ENCODE measurements at regions of chr11 and their contacts with region 1.

Region 1: GRCh38 chr11:117807482-117808327 is 10.7 kb upstream of the DSCAML1 start:
- DNase-seq: no peak
- ATAC-seq: peak; percentile 56
- H3K4me3 ChIP-seq: no peak overlapping the region
- H3K27ac ChIP-seq: no peak overlapping the region
- H3K4me1 ChIP-seq: no peaks in the 10 kb centered on the region
- H3K27me3 ChIP-seq: no peaks in the 10 kb centered on the region; a peak in 1 of 5 replicates
- CTCF ChIP-seq: peak; percentile 80
- EP300 ChIP-seq: no peak
- POLR2A ChIP-seq: no peak
- RAD21 ChIP-seq: peak; percentile 57; the same call in 1 of the 2 replicates

Region 2: DNA sequence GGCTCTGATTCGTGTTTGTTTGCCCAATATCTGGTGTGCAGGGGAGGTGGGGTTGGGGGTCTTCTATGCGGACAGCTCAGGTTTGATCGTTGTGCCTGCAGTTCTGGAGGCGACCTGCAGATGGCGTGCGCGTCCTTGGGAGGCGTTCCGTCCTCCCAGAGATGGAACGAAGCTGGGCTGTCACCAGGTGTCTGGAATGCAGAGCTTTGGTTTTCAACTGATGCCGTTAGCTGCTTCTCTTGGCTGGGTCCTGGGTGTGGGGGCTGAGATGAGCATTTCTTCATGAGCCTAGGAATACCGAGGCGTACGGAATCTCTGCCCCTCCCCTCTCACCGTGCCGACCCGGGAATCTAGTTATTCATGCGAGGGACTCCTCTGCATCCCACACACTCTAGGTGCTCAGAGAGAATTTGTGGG is 381.4 kb before region 1 on chr11:
- CTCF ChIA-PET with region 1: no interaction called
- POLR2A ChIA-PET with region 1: no interaction called
- in situ Hi-C with region 1: no loop called
- intact Hi-C with region 1: loop called (anchors 1 kb)
- DNase-seq: peak; percentile 38
- ATAC-seq: peak; percentile 80
- H3K4me3 ChIP-seq: no peak overlapping the region
- H3K27ac ChIP-seq: no peak overlapping the region
- H3K4me1 ChIP-seq: peaks cover 4% of the 10 kb centered on the region; the same call in 1 of the 2 replicates
- H3K27me3 ChIP-seq: peaks cover 2 to 24% of the 10 kb centered on the region in 2 experiments; a peak in 4 of 5 replicates
- CTCF ChIP-seq: peak; percentile 95
- EP300 ChIP-seq: no peak
- POLR2A ChIP-seq: no peak
- RAD21 ChIP-seq: peak; percentile 79

Region 3: GRCh38 chr11:117443266-117444195 is 364.2 kb before region 1 on chr11:
- CTCF ChIA-PET with region 1: interaction called, 6 read pairs
- POLR2A ChIA-PET with region 1: no interaction called
- in situ Hi-C with region 1: loop called (anchors 5 kb)
- intact Hi-C with region 1: no loop called
- DNase-seq: peak; percentile 40
- ATAC-seq: peak; percentile 96
- H3K4me3 ChIP-seq: no peak overlapping the region
- H3K27ac ChIP-seq: no peak overlapping the region
- H3K4me1 ChIP-seq: no peaks in the 10 kb centered on the region
- H3K27me3 ChIP-seq: peaks cover 2 to 32% of the 10 kb centered on the region in 2 experiments; a peak in 3 of 5 replicates
- CTCF ChIP-seq: peak; percentile 89
- EP300 ChIP-seq: no peak
- POLR2A ChIP-seq: no peak
- RAD21 ChIP-seq: peak; percentile 77

Region 4: DNA sequence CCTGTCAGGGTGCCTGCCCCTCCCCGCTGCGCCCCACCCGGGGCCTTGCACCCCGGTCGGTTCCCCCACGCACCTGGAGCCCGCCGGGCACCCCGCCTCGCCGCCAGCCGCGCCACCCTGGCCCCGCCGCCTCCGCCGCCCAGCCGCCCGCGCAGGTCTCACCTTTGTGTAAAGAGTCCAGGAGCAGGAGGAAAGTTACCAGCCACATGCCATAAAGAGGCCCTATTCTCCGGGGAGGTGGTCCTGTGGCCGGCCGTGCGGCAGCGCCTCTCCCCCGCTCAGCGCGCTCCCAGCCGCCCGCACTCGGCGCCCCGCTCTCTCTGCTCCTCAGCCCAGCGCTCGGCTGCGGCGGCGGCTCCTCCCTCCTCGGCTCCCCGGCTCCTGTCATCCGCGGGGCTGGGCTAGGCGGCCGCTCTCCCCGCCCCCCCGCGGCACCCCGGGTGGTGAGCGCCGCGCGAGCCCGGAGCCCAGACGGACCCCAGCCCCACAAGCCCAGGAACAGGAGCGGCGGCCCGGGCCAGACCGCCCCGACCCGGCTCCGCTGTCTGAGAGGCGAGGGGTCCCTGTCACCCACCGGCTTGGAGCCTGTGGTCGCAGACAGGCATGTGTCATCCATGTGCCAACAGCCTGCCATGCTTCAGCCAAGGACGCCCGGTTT is 10.7 kb before region 1 on chr11 and contains the start of gene DSCAML1:
- CTCF ChIA-PET with region 1: no interaction called
- POLR2A ChIA-PET with region 1: no interaction called
- in situ Hi-C with region 1: no loop called
- intact Hi-C with region 1: no loop called
- DNase-seq: no peak
- ATAC-seq: peak; percentile 68
- H3K4me3 ChIP-seq: peak within 1 kb of the TSS in 1 of 3 experiments; percentile 28; a peak in 1 of 6 replicates
- H3K27ac ChIP-seq: no peak within 1 kb of the TSS
- H3K4me1 ChIP-seq: peaks cover 16% of the 10 kb centered on the region
- H3K27me3 ChIP-seq: peaks cover 5 to 32% of the 10 kb centered on the region in 2 experiments; a peak in 4 of 5 replicates
- CTCF ChIP-seq: no peak
- EP300 ChIP-seq: no peak
- POLR2A ChIP-seq: no peak
- RAD21 ChIP-seq: no peak
- total RNA-seq, gene DSCAML1: 0.14 and 0.29 TPM in 2 replicates